Activated CD8-positive, alpha-beta T cell treated with anti-CD3 and anti-CD28 coated beads, Interleukin-2, amount 10 ng/mL, durations not matched to agents 7 days and 5 days (primary cell): ENCODE measurements at regions of chr6 and their contacts with region 1.

Region 1: GRCh38 chr6:24855395-24856245 is 56.9 kb upstream of the ARMH2 start:
- DNase-seq: peak; percentile 84
- ATAC-seq: peak; percentile 49
- H3K4me3 Mint-ChIP-seq: no peak overlapping the region
- H3K27ac Mint-ChIP-seq: peak overlapping the region; percentile 64
- H3K4me1 Mint-ChIP-seq: peaks cover 52% of the 10 kb centered on the region
- H3K27me3 Mint-ChIP-seq: no peaks in the 10 kb centered on the region

Region 2: DNA sequence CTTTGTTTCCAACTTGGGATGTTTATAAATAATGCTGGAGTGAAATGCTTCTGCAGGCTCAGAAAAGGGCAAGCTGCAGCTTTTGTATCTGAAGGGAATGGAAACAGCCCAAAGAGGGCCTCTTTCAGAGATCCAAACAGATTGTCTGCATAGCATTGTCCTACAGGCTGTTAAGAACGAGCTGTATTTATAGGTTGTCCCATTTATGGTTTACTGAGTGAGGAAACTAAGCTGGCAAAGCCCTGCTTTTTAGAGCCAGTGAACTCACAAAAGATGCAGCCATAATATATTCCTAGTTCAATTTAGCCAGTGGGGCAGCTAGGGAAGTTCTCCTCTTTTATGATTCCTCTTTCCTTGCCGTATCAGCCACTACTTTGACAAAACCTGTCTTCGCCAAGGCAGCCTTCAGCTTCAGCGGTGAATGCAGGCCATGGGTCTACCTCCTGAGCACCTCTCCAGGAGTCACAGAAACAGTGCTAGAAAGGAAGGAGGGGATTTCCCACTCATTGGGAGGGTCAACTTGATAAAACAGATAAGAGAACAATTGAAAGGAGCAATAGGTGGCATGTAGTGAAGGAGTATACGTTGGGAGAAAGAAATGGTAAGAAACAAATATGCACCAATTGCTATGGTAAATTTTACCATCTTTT is 224.6 kb before region 1 on chr6:
- CTCF ChIA-PET with region 1: no interaction called
- POLR2A ChIA-PET with region 1: no interaction called
- DNase-seq: no peak
- ATAC-seq: no peak
- H3K4me3 Mint-ChIP-seq: no peak overlapping the region
- H3K27ac Mint-ChIP-seq: no peak overlapping the region
- H3K4me1 Mint-ChIP-seq: no peaks in the 10 kb centered on the region
- H3K27me3 Mint-ChIP-seq: peaks cover 26% of the 10 kb centered on the region

Region 3: GRCh38 chr6:24910961-24911712 is 55.5 kb after region 1 on chr6:
- CTCF ChIA-PET with region 1: interaction called, 64 read pairs
- POLR2A ChIA-PET with region 1: interaction called, 4 read pairs
- DNase-seq: no peak
- ATAC-seq: peak; percentile 42
- H3K4me3 Mint-ChIP-seq: peak overlapping the region; percentile 81
- H3K27ac Mint-ChIP-seq: peak overlapping the region; percentile 87
- H3K4me1 Mint-ChIP-seq: peaks cover 94% of the 10 kb centered on the region
- H3K27me3 Mint-ChIP-seq: no peaks in the 10 kb centered on the region

Region 4: DNA sequence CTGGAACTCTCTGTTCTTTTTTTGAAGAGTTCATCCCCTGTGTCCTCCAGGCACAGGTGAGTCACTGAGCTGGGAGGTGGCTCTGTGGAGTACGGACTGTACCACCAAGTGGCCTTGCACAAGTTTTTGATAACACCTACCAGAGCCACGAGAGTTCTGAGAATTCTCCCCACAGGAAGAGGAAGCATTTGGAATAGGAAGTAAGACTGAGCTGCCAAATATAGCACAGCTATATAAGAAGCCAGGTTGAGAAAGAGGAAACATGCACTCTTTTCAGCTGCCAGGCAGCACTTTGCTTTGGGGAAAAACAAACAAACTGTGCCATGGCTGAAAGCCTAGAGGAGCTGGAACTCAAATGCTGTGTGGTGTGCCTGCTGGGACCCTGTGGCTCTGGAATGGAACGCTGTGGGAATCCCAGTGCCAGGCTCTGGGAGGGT is 151.0 kb after region 1 on chr6:
- CTCF ChIA-PET with region 1: interaction called, 24 read pairs
- POLR2A ChIA-PET with region 1: interaction called, 7 read pairs
- DNase-seq: peak; percentile 76
- ATAC-seq: peak; percentile 84
- H3K4me3 Mint-ChIP-seq: peak overlapping the region; percentile 58
- H3K27ac Mint-ChIP-seq: peak overlapping the region; percentile 92
- H3K4me1 Mint-ChIP-seq: peaks cover 82% of the 10 kb centered on the region
- H3K27me3 Mint-ChIP-seq: no peaks in the 10 kb centered on the region

Region 5: DNA sequence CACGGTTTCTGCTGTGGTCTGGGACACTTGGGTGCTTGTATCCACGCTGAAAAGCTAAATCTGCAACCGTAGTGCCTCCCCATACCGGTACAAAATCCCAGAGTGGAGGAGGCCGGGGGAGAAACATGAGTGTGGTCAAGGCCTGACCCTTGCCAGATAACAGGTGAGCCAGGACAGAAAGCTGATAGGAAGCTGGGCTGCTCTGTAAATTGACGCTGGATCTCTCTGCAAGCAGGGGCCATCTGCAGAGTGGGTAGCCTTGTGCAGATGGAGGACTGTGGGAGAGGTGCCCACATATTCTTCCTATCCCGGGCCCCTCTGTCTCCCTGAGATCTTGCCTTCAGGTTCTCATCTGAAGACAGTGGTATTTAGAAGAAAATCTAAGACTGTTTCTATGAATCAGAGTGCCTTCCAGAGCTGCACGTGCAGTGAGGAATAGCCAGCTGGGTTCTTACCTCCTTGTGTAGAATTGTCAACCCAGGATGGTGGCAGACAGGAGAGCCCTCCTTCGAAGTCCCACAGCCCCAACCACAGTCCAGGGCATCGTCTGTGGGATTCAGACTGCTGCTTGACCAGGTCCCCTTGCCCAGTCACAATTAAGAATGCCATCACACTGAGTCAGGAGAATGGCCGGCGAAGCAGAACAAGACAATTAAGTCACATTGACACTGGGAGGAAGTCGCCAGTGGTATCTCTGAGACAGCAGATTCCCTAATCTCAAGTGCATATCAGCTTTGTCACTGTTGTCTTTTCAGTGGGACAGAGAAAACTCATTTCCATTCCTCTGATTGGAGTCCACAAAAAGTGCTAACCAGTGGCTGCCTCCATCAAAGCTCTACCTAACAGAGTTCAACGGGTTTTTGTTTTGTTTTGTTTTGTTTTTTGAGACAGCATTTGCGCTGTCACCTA is 180.2 kb after region 1 on chr6:
- CTCF ChIA-PET with region 1: interaction called, 11 read pairs
- POLR2A ChIA-PET with region 1: interaction called, 4 read pairs
- DNase-seq: peak; percentile 39
- ATAC-seq: peak; percentile 45
- H3K4me3 Mint-ChIP-seq: peak overlapping the region; percentile 73
- H3K27ac Mint-ChIP-seq: peak overlapping the region; percentile 81
- H3K4me1 Mint-ChIP-seq: peaks cover 68% of the 10 kb centered on the region
- H3K27me3 Mint-ChIP-seq: no peaks in the 10 kb centered on the region